Stomach (tissue), 19 donors: ENCODE measurements at regions of chr17 and their contacts with region 1.

Region 1: DNA sequence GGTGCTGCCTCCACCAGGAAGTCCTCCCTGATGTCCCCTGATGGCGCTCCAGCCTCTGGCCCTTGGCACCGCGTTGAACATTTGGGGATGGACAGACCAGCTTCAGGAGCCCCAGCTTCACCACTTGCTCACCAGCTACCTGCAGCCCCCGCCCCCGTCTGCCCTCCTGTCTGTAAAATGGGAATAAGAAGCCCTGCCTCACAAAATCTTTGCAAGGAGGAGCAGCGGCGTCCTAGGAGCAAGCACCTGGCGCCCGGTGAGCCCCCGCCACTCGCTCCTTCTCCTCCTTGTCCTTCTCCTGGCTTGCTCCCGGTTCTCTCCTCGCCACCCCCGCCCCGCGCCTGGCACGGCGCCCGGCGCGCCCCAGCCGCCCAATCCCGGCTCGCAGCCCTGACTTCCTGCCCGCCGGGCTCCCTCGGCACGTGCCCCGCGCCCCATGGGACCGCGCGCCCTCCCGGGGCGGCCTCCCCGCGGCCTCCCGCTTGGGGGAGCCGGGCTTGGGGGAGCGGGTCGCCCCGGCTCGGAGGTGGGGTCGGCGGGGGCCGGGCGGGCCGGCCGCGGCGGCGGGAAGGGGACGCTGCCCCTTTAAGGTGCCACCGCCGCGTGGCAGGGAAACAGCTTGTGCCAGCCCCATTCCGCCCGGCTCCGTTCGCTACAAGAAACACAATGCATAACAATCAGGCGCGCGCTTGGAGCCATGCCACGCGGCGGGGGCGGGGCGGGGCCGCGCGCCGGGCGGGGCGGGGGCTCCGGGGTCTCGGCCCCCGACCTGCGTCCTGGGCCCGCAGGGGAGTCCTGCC is 9.1 kb upstream of the PPP1R1B start:
- DNase-seq: peak; percentile 82 to 89
- H3K4me3 ChIP-seq: peak overlapping the region; percentile 58 to 64 (median 62)
- H3K27ac ChIP-seq: peak overlapping the region; percentile 60 to 86 (median 76)
- H3K4me1 ChIP-seq: peaks cover 8 to 26% (median 24%) of the 10 kb centered on the region in 4 donors
- H3K27me3 ChIP-seq: peaks cover 0 to 72% (median 2%) of the 10 kb centered on the region in 3 donors
- CTCF ChIP-seq: no peak
- EP300 ChIP-seq: no peak
- POLR2A ChIP-seq: no peak

Region 2: DNA sequence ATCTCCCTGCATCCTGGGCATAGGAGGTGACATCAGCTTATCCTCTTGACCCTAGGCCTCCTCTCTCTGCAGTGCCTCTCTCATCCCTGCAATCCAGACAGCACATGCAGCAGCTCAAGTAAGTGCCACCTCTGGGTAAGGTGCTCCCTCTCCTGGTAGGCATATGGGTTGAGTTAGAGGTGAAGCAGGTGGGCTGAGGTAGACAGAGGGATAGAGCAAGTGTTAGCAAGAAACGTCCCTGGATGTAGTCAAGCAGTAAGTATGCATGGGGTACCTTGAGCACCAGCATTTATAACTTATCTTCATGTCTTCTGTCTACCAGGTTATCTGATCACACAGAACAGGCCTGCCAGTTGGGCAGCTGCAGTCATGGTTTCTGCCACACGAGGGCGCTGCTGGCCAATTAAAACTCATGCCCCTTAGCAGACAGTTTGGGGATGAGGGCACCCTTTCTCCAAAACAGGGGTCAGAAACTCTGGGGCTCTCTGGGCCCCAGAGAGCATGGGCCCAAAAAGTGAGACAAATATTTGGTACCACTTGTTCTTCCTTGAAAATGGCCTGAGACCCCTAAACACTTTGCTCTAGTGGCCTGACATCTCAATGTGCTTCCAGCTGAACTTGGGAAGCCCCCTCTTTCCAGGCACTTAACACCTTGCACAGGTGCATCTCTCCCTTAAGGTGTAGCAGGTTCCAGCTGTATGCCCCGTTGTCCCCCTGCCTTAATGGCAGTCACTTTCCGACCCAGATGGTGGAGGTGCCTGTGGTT is 69.8 kb before region 1 on chr17:
- intact Hi-C with region 1: loop called (anchors 5 kb)
- DNase-seq: peak; percentile 76 to 77
- H3K4me3 ChIP-seq: no peak overlapping the region
- H3K27ac ChIP-seq: no peak overlapping the region
- H3K4me1 ChIP-seq: peaks cover 0 to 18% (median 6%) of the 10 kb centered on the region in 4 donors
- H3K27me3 ChIP-seq: no peaks in the 10 kb centered on the region
- CTCF ChIP-seq: peak in 5 of 7 experiments; percentile 66 to 92 (median 91)
- EP300 ChIP-seq: no peak
- POLR2A ChIP-seq: no peak